ENCODE measurements at regions of chrX and their contacts with region 1.

Region 1: DNA sequence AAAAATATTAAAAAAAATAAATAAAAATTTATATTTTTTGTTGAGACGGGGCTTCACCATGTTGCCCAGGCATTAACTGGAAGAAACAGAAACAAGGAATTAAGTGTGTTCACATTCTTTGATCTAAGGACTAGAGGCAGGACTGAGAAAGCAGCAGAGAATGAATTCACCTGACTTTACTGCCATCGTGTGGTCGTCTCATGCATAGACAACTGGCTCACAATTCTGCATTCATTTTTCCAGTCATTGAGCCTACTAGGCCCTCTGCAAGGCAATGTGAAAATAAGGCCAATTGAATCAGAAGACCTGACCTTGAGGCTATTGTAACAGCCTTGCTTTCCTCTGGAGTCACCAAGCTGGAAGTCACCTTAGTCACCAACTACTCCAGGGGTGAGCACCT is 37.4 kb downstream of the LHFPL1 start:
- DNase-seq: peak; percentile 73
- H3K4me3 Mint-ChIP-seq: no peak overlapping the region
- H3K27ac Mint-ChIP-seq: no peak overlapping the region
- H3K4me1 Mint-ChIP-seq: peaks cover 16% of the 10 kb centered on the region
- H3K27me3 Mint-ChIP-seq: no peaks in the 10 kb centered on the region

Region 2: DNA sequence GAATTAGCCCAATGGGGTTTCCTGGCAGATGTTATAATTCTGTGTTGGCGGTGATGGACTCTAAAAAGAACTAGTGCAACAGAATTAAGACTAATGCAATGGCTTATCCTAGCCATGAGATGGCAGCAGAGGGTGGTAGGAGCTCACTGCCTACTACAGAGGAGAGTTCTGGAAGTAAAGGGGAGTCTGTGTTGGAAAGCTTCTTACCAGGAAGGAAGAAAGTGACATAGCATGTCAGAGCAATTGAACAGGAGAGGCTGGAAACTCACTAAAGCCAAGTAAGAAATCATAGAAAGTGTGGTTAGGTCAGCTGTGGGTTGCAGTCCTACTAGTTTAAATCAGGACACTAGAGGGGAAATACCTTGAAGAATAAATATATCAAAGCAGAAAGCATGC is 772.7 kb before region 1 on chrX:
- intact Hi-C with region 1: loop called (anchors 5 kb)
- DNase-seq: peak; percentile 65
- H3K4me3 Mint-ChIP-seq: no peak overlapping the region
- H3K27ac Mint-ChIP-seq: no peak overlapping the region
- H3K4me1 Mint-ChIP-seq: peaks cover 3% of the 10 kb centered on the region
- H3K27me3 Mint-ChIP-seq: no peaks in the 10 kb centered on the region

Region 3: GRCh38 chrX:112164420-112164819 is 477.9 kb before region 1 on chrX:
- intact Hi-C with region 1: no loop called
- DNase-seq: no peak
- H3K4me3 Mint-ChIP-seq: no peak overlapping the region
- H3K27ac Mint-ChIP-seq: no peak overlapping the region
- H3K4me1 Mint-ChIP-seq: no peaks in the 10 kb centered on the region
- H3K27me3 Mint-ChIP-seq: no peaks in the 10 kb centered on the region

Region 4: GRCh38 chrX:112313201-112313600 is 329.1 kb before region 1 on chrX:
- intact Hi-C with region 1: loop called (anchors 10 kb)
- DNase-seq: no peak
- H3K4me3 Mint-ChIP-seq: no peak overlapping the region
- H3K27ac Mint-ChIP-seq: no peak overlapping the region
- H3K4me1 Mint-ChIP-seq: no peaks in the 10 kb centered on the region
- H3K27me3 Mint-ChIP-seq: no peaks in the 10 kb centered on the region

Region 5: GRCh38 chrX:112678831-112679230 is 36.5 kb after region 1 on chrX:
- intact Hi-C with region 1: loop called (anchors 2 kb)
- DNase-seq: no peak
- H3K4me3 Mint-ChIP-seq: peak overlapping the region; percentile 77
- H3K27ac Mint-ChIP-seq: peak overlapping the region; percentile 87
- H3K4me1 Mint-ChIP-seq: peaks cover 28% of the 10 kb centered on the region
- H3K27me3 Mint-ChIP-seq: no peaks in the 10 kb centered on the region

Region 6: GRCh38 chrX:112819010-112819640 is 176.8 kb after region 1 on chrX:
- intact Hi-C with region 1: no loop called
- DNase-seq: peak; percentile 51
- H3K4me3 Mint-ChIP-seq: no peak overlapping the region
- H3K27ac Mint-ChIP-seq: no peak overlapping the region
- H3K4me1 Mint-ChIP-seq: peaks cover 11% of the 10 kb centered on the region
- H3K27me3 Mint-ChIP-seq: no peaks in the 10 kb centered on the region

Region 7: GRCh38 chrX:113059714-113060113 is 417.4 kb after region 1 on chrX:
- intact Hi-C with region 1: no loop called
- DNase-seq: no peak
- H3K4me3 Mint-ChIP-seq: no peak overlapping the region
- H3K27ac Mint-ChIP-seq: no peak overlapping the region
- H3K4me1 Mint-ChIP-seq: no peaks in the 10 kb centered on the region
- H3K27me3 Mint-ChIP-seq: no peaks in the 10 kb centered on the region